PC-3 (cell line): ENCODE measurements at regions of chr15 and their contacts with region 1.

Region 1: DNA sequence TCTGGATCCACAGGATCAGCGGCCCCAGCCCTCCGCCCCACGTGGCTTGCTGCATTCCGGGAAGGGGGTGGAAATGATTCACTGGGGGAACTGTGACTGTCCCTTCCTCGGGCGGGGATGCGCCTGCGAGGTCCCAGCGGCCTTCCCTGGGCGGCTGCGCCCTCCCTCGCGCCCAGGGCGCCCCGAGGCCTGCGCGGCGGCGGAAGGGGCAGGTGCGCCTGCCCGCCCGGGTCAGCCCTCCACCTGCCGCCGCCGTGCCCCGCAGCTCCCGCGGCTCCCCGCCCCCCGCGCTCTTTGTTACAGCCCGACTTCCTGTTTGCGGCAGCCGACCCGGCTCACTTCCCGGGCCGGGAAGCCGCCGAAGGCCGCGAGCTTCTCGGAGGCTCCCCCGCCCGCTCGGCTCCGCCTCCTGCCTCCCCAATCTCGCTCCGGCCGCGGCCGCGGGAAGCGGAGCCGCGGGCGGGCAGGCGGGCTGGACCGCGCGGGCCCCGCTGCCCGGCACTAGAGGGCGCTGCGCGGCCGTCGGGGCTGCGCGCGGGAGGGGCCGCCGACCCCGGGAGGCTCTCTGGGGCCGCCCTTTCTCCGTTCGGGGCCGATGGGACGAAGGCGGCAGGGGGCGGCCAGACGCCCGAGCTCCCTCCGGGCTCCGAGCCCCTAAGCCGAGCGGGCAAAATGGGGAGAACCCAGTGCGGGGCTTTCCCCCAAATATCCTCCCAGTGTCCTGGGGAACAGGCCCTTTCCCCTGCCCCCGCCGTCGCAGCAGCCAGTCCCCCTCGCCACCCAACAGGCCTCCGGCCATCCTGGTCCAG is 11.5 kb upstream of the CHAC1 start:
- DNase-seq: peak; percentile 84
- ATAC-seq: peak; percentile 78
- H3K4me3 ChIP-seq: peak overlapping the region; percentile 71
- H3K27ac ChIP-seq: peak overlapping the region; percentile 58
- H3K4me1 ChIP-seq: peaks cover 29% of the 10 kb centered on the region
- H3K27me3 ChIP-seq: no peaks in the 10 kb centered on the region
- CTCF ChIP-seq: peak; percentile 43

Region 2: GRCh38 chr15:40771242-40771641 is 170.5 kb before region 1 on chr15:
- CTCF ChIA-PET with region 1: interaction called, 12 read pairs
- POLR2A ChIA-PET with region 1: no interaction called
- intact Hi-C with region 1: no loop called
- DNase-seq: no peak
- ATAC-seq: no peak
- H3K4me3 ChIP-seq: no peak overlapping the region
- H3K27ac ChIP-seq: no peak overlapping the region
- H3K4me1 ChIP-seq: peaks cover 38% of the 10 kb centered on the region
- H3K27me3 ChIP-seq: no peaks in the 10 kb centered on the region
- CTCF ChIP-seq: no peak

Region 3: GRCh38 chr15:40928821-40929659 is 12.7 kb before region 1 on chr15 and contains the start of gene DLL4:
- CTCF ChIA-PET with region 1: interaction called, 18 read pairs
- POLR2A ChIA-PET with region 1: interaction called, 11 read pairs
- intact Hi-C with region 1: no loop called
- DNase-seq: peak; percentile 77
- ATAC-seq: peak; percentile 49
- H3K4me3 ChIP-seq: peak within 1 kb of the TSS; percentile 76
- H3K27ac ChIP-seq: no peak within 1 kb of the TSS
- H3K4me1 ChIP-seq: peaks cover 45% of the 10 kb centered on the region
- H3K27me3 ChIP-seq: peaks cover 25% of the 10 kb centered on the region
- CTCF ChIP-seq: no peak
- total RNA-seq, gene DLL4: 2.2 and 2.9 TPM in 2 replicates

Region 4: DNA sequence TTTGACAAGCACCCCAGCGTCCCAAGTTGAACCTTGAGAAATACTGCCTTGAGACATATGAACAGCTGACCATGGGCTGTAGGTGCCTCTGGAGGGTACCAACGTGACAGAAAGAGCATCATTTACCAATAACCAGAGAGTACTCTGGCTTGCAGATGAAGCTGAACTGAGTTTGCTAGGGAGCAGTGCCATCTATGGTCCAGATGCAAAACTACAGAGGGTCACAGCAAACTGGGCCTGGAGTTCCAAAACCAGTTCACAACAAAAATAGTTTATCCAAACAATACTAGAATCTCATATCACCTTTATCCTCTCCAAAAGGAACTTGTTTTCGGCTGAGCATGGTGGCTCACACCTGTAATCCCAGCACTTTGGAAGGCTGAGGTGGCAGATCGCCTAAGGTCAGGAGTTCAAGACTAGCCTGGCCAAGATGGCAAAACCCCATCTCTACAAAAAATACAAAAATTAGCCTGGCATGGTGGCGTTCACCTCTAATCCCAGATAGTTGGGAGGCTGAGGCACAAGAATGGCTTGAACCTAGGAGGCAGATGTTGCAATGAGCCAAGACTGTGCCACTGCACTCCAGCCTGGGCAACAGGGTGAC is 80.9 kb after region 1 on chr15:
- CTCF ChIA-PET with region 1: interaction called, 16 read pairs
- POLR2A ChIA-PET with region 1: no interaction called
- intact Hi-C with region 1: loop called (anchors 1 kb)
- DNase-seq: peak; percentile 68
- ATAC-seq: peak; percentile 69
- H3K4me3 ChIP-seq: no peak overlapping the region
- H3K27ac ChIP-seq: no peak overlapping the region
- H3K4me1 ChIP-seq: peaks cover 13% of the 10 kb centered on the region
- H3K27me3 ChIP-seq: no peaks in the 10 kb centered on the region
- CTCF ChIP-seq: peak; percentile 84